ENCODE measurements at regions of chr15 and their contacts with region 1.

Region 1: GRCh38 chr15:51649659-51650521 is 27.3 kb upstream of the DMXL2 start:
- DNase-seq: no peak
- H3K4me3 ChIP-seq: no peak overlapping the region
- H3K27ac ChIP-seq: no peak overlapping the region
- H3K4me1 ChIP-seq: no peaks in the 10 kb centered on the region
- H3K27me3 ChIP-seq: no peaks in the 10 kb centered on the region
- CTCF ChIP-seq: peak; percentile 62 to 79 (median 68)
- EP300 ChIP-seq: no peak
- POLR2A ChIP-seq: no peak

Region 2: GRCh38 chr15:51505251-51505650 is 144.6 kb before region 1 on chr15:
- intact Hi-C with region 1: no loop called
- DNase-seq: no peak
- H3K4me3 ChIP-seq: no peak overlapping the region
- H3K27ac ChIP-seq: no peak overlapping the region
- H3K4me1 ChIP-seq: no peaks in the 10 kb centered on the region
- H3K27me3 ChIP-seq: no peaks in the 10 kb centered on the region
- CTCF ChIP-seq: no peak
- EP300 ChIP-seq: no peak
- POLR2A ChIP-seq: no peak

Region 3: DNA sequence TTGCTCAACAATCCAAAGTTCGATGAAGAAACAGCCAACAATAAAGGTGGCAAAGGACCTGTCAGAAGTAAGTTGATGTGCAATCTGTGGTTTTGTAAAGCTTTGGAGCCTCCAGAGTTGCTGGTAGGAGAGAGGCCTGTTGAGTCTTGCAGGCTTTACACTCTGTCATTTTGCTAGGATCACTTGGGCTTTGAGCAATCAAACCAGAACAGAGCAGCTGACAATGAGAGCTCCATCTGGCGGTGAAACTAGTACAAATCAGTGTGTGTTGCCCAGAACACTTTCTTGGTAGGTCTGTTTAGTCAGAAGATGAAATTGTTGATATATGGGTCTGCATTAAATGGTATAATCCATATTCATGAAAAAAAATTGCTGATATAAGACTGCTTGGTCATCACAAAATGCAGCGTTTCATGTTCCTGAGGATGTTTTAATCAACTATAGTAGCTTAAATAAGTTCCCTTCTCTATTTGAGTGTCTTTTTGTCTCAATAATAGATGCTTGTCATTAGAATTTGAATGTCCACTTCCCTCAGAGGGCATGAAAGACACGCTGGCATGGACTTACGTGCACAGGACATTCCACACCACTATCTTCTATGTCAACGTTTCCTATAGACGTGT is 127.2 kb after region 1 on chr15:
- intact Hi-C with region 1: loop called (anchors 1 kb)
- DNase-seq: peak; percentile 80
- H3K4me3 ChIP-seq: no peak overlapping the region
- H3K27ac ChIP-seq: no peak overlapping the region
- H3K4me1 ChIP-seq: peaks cover 0 to 10% (median 2%) of the 10 kb centered on the region in 4 donors
- H3K27me3 ChIP-seq: no peaks in the 10 kb centered on the region
- CTCF ChIP-seq: peak; percentile 34 to 70 (median 58)
- EP300 ChIP-seq: no peak
- POLR2A ChIP-seq: no peak